Naive thymus-derived CD4-positive, alpha-beta T cell (primary cell): ENCODE measurements at regions of chr11 and their contacts with region 1.

Region 1: GRCh38 chr11:123020968-123021367 is 39.3 kb upstream of the BSX start:
- DNase-seq: peak in 5 of 9 donors; percentile 31 to 50 (median 37)
- ATAC-seq: peak; percentile 81
- H3K4me3 ChIP-seq: no peak overlapping the region
- H3K4me3 Mint-ChIP-seq: no peak overlapping the region
- H3K27ac ChIP-seq: no peak overlapping the region
- H3K27ac Mint-ChIP-seq: no peak overlapping the region
- H3K4me1 ChIP-seq: peaks cover 0 to 10% of the 10 kb centered on the region in 2 donors
- H3K4me1 Mint-ChIP-seq: peaks cover 6 to 14% (median 7%) of the 10 kb centered on the region in 7 donors
- H3K27me3 ChIP-seq: no peaks in the 10 kb centered on the region
- H3K27me3 Mint-ChIP-seq: peaks cover 6 to 25% (median 8%) of the 10 kb centered on the region in 5 donors

Region 2: GRCh38 chr11:122578168-122578825 is 442.7 kb before region 1 on chr11:
- CTCF ChIA-PET with region 1: interaction called, 5 read pairs
- POLR2A ChIA-PET with region 1: no interaction called
- intact Hi-C with region 1: loop called (anchors 1 to 2 kb)
- DNase-seq: no peak
- ATAC-seq: no peak
- H3K4me3 ChIP-seq: no peak overlapping the region
- H3K4me3 Mint-ChIP-seq: no peak overlapping the region
- H3K27ac ChIP-seq: no peak overlapping the region
- H3K27ac Mint-ChIP-seq: no peak overlapping the region
- H3K4me1 ChIP-seq: no peaks in the 10 kb centered on the region
- H3K4me1 Mint-ChIP-seq: peaks cover 5 to 17% (median 11%) of the 10 kb centered on the region in 7 donors
- H3K27me3 ChIP-seq: no peaks in the 10 kb centered on the region
- H3K27me3 Mint-ChIP-seq: peaks cover 0 to 7% (median 0%) of the 10 kb centered on the region in 5 donors

Region 3: DNA sequence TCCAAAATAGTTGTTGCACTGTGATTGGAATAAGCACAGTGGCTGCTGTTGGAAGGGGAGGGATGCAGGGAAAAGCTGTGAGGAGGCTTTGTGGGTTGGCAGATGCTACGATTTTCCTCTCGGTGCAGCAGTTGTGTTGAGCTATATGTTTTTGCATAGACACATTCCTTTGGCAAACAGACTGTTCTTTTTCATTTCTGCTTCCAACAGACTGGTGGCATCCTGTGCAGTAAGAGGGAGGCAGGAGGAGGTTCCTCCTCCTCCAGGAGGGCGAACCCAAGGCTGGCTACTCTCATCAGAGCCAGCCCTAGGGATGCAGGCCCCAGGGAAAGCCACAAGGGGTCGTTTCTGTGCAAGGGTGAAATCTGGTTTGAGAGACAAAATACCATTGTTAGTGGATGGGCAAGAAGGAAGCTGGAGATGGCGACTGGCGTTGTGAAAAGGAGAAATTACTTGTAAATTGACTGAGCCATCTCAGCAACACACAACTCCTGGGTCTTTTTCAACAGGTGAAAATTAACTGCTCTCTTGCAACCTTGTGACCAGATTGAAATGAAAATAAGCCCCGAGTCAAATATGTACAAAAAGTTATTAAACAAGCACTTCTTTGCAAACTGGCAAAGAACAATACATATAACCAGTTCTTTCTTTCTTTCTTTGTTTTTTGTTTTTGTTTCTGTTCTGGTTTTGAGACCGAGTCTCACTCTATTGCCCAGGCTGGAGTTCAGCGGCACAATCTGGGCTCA is 392.0 kb before region 1 on chr11:
- CTCF ChIA-PET with region 1: no interaction called
- POLR2A ChIA-PET with region 1: no interaction called
- intact Hi-C with region 1: loop called in 1 of 2 experiments (anchors 1 kb)
- DNase-seq: peak; percentile 46 to 70 (median 62)
- ATAC-seq: peak; percentile 93
- H3K4me3 ChIP-seq: no peak overlapping the region
- H3K4me3 Mint-ChIP-seq: no peak overlapping the region
- H3K27ac ChIP-seq: no peak overlapping the region
- H3K27ac Mint-ChIP-seq: peak overlapping the region in 4 of 9 donors; percentile 18 to 49 (median 24)
- H3K4me1 ChIP-seq: no peaks in the 10 kb centered on the region
- H3K4me1 Mint-ChIP-seq: peaks cover 0 to 30% (median 16%) of the 10 kb centered on the region in 7 donors
- H3K27me3 ChIP-seq: no peaks in the 10 kb centered on the region
- H3K27me3 Mint-ChIP-seq: peaks cover 0 to 16% (median 0%) of the 10 kb centered on the region in 5 donors

Region 4: GRCh38 chr11:122863704-122864326 is 157.2 kb before region 1 on chr11:
- CTCF ChIA-PET with region 1: interaction called, 78 read pairs
- POLR2A ChIA-PET with region 1: interaction called, 7 read pairs
- intact Hi-C with region 1: loop called (anchors 1 kb)
- DNase-seq: peak in 6 of 9 donors; percentile 19 to 51 (median 40)
- ATAC-seq: peak; percentile 60
- H3K4me3 ChIP-seq: no peak overlapping the region
- H3K4me3 Mint-ChIP-seq: no peak overlapping the region
- H3K27ac ChIP-seq: no peak overlapping the region
- H3K27ac Mint-ChIP-seq: no peak overlapping the region
- H3K4me1 ChIP-seq: no peaks in the 10 kb centered on the region
- H3K4me1 Mint-ChIP-seq: peaks cover 0 to 2% (median 0%) of the 10 kb centered on the region in 7 donors
- H3K27me3 ChIP-seq: no peaks in the 10 kb centered on the region
- H3K27me3 Mint-ChIP-seq: peaks cover 0 to 49% (median 0%) of the 10 kb centered on the region in 5 donors

Region 5: DNA sequence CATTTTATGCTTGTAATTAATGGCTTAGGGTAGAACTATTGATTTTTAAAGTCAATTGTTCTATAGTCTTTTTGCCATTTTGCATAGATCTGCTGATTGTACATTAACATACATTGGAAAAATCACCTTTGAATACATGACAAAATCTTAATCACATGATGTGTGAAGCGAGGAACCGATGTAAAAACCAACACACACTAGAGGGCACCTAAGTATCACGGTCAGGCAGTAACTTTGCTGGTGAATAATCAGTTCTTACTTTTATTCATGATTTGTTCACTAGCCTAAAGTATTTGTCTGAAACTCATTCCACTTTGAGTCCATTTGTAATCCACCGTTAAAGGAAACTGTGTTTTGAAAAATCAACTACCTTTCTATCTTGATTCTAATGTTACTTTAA is 110.2 kb before region 1 on chr11:
- CTCF ChIA-PET with region 1: interaction called, 3 read pairs
- POLR2A ChIA-PET with region 1: no interaction called
- intact Hi-C with region 1: loop called in 1 of 2 experiments (anchors 1 kb)
- DNase-seq: peak in 1 of 9 donors; percentile 11
- ATAC-seq: no peak
- H3K4me3 ChIP-seq: no peak overlapping the region
- H3K4me3 Mint-ChIP-seq: no peak overlapping the region
- H3K27ac ChIP-seq: no peak overlapping the region
- H3K27ac Mint-ChIP-seq: no peak overlapping the region
- H3K4me1 ChIP-seq: no peaks in the 10 kb centered on the region
- H3K4me1 Mint-ChIP-seq: peaks cover 0 to 2% (median 0%) of the 10 kb centered on the region in 7 donors
- H3K27me3 ChIP-seq: no peaks in the 10 kb centered on the region
- H3K27me3 Mint-ChIP-seq: no peaks in the 10 kb centered on the region

Region 6: DNA sequence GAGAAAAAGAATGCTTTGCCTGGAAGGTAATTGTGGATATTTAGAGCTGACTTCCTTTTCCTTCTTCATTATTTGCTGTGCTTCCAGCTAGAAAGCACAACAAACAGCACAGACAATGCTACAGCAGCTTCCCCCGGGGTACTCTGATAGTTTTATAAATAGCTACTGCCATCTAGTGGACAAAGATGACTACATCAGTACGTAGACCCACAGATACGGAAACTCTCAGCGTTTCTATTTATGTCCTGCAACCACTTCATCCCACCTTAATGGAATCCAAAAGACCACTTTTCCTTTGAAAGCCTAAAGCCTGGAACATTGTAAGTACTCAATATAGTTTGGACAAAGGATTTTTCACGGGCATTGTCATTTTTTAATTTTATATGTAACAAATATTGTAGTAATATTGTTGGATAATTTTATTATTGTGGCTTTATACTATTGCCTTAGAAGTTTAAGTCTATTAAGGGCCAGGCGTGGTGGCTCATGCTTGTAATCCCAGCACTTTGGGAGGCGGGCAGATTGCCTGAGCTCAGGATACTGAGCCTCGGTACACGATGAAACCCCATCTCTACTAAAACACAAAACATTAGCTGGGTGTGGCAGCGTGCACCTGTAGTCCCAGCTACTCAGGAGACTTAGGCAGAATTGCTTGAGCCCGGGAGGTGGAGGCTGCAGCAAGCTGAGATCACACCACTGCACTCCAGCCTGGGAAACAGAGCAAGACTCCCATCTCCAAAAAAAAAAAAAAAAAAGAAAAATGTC is 33.5 kb after region 1 on chr11:
- CTCF ChIA-PET with region 1: interaction called, 13 read pairs
- POLR2A ChIA-PET with region 1: interaction called, 3 read pairs
- intact Hi-C with region 1: loop called (anchors 1 kb)
- DNase-seq: peak in 7 of 9 donors; percentile 52 to 75 (median 67)
- ATAC-seq: peak; percentile 87
- H3K4me3 ChIP-seq: peak overlapping the region; percentile 11
- H3K4me3 Mint-ChIP-seq: peak overlapping the region in 9 of 10 donors; percentile 20 to 100 (median 65)
- H3K27ac ChIP-seq: peak overlapping the region; percentile 38
- H3K27ac Mint-ChIP-seq: peak overlapping the region; percentile 69 to 100 (median 92)
- H3K4me1 ChIP-seq: peaks cover 50 to 56% of the 10 kb centered on the region in 2 donors
- H3K4me1 Mint-ChIP-seq: peaks cover 42 to 60% (median 55%) of the 10 kb centered on the region in 7 donors
- H3K27me3 ChIP-seq: no peaks in the 10 kb centered on the region
- H3K27me3 Mint-ChIP-seq: no peaks in the 10 kb centered on the region